Panc1 (cell line): ENCODE measurements at regions of chr1 and their contacts with region 1.

Region 1: DNA sequence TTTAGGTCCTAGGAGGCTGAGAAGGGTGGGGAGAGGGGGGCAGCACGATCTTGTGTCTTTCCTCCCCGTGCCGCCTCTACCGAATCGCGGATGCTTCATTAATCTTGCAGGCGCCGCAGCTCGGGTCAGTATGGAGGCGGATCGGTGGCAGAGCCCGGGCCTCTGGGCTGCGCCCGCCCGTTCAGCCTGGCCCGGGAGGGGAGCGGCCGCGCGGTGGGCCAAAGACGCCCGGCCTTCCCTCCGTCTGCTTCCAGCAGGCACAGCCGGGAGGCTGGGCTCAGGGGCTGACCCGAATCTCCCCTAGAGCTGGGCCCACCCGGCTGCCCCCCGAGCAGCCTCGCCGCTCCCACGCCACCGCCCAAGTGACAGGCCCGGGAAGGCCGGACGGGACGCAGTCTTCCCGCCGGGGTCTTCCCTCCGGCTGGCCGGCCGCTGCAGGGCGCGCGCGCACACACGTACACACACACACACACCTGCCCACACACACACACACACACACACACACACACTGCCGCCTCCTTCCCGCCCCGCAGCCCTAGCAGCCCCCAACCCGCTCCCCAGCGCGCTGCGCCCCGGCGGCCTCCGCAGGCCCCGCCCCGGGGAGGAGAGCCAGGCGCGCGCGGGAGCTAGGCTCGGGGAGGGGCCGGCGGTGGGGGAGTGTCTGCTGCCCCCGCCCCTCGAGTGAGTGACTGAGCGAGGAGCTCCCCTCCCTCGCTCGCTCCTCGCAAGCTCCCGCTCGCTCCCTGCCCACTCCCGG is at the start of gene C1orf21:
- DNase-seq: no peak
- ATAC-seq: peak; percentile 94
- H3K4me3 ChIP-seq: peak within 1 kb of the TSS; percentile 57 to 59
- H3K27ac ChIP-seq: no peak within 1 kb of the TSS
- H3K4me1 ChIP-seq: no peaks in the 10 kb centered on the region
- H3K27me3 ChIP-seq: peaks cover 32% of the 10 kb centered on the region
- CTCF ChIP-seq: no peak
- total RNA-seq, gene C1orf21: 0.15 TPM

Region 2: DNA sequence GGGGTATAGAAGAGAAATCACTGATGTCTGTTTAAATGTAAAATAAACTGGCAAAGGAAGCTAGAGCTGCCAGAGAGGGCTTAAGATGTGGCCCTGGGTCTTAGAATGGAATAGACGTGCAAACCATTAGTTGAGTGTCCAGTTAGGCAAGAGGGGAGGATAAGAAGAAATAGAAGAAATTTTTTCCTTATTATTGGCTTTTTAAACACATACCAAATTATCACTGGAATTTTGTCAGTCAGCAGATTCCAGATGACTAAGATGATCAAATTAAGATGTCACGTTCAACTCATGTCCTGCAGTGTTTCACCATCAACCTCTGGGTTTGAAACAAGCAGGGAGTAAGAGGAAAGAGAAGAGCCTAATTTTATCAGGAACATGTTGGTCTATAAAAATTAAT is 71.2 kb before region 1 on chr1:
- CTCF ChIA-PET with region 1: no interaction called
- POLR2A ChIA-PET with region 1: no interaction called
- in situ Hi-C with region 1: no loop called
- intact Hi-C with region 1: no loop called
- DNase-seq: no peak
- ATAC-seq: no peak
- H3K4me3 ChIP-seq: no peak overlapping the region
- H3K27ac ChIP-seq: no peak overlapping the region
- H3K4me1 ChIP-seq: no peaks in the 10 kb centered on the region
- H3K27me3 ChIP-seq: no peaks in the 10 kb centered on the region
- CTCF ChIP-seq: no peak

Region 3: GRCh38 chr1:184352776-184353175 is 33.7 kb before region 1 on chr1:
- CTCF ChIA-PET with region 1: no interaction called
- POLR2A ChIA-PET with region 1: no interaction called
- in situ Hi-C with region 1: no loop called
- intact Hi-C with region 1: no loop called
- DNase-seq: no peak
- ATAC-seq: no peak
- H3K4me3 ChIP-seq: no peak overlapping the region
- H3K27ac ChIP-seq: no peak overlapping the region
- H3K4me1 ChIP-seq: no peaks in the 10 kb centered on the region
- H3K27me3 ChIP-seq: no peaks in the 10 kb centered on the region
- CTCF ChIP-seq: no peak

Region 4: GRCh38 chr1:184399192-184399847 is 12.8 kb after region 1 on chr1:
- CTCF ChIA-PET with region 1: no interaction called
- POLR2A ChIA-PET with region 1: interaction called, 10 read pairs
- in situ Hi-C with region 1: no loop called
- intact Hi-C with region 1: no loop called
- DNase-seq: no peak
- ATAC-seq: no peak
- H3K4me3 ChIP-seq: no peak overlapping the region
- H3K27ac ChIP-seq: no peak overlapping the region
- H3K4me1 ChIP-seq: no peaks in the 10 kb centered on the region
- H3K27me3 ChIP-seq: no peaks in the 10 kb centered on the region
- CTCF ChIP-seq: no peak